ENCODE measurements at regions of chr1 and their contacts with region 1.

Region 1: GRCh38 chr1:182143154-182143657 is 81.7 kb upstream of the ZNF648 start:
- DNase-seq: peak; percentile 94
- ATAC-seq: peak; percentile 76 to 79

Region 2: DNA sequence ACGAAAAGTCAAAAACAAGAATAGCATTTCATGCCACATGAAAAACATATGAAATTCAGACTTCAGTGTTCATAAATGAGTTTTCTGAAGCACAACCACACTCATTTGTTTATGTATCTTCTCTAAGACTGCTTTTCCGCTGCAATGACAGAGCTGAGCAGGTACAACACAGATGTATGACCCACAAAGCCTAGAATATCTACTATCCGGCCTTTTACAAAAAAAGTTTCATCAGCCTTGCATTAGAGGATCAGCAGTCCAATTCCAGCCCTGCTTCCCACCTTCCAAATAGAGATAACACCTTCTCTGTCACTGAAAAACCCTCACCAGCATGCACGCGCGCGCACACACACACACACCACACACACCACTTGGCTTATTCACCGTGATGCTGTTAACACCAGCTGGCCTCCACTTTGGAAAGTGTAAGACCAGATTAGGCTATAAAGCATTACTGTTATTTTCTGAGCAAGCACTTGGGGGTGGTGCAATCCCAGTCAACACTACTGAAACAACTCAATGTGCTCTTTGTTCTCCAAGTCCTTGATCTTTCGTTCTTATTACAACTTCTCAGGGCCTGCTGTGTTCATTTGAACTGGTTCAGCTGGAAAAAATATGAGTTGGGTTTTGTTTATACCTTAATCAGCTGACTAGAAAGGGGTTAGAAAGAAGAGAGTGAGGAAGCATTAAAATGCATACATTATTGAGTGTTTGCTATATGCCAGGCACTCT is 158.4 kb after region 1 on chr1:
- intact Hi-C with region 1: loop called (anchors 10 kb)
- DNase-seq: peak; percentile 56
- ATAC-seq: peak; percentile 74 to 87

Region 3: GRCh38 chr1:182397771-182398393 is 254.7 kb after region 1 on chr1:
- intact Hi-C with region 1: loop called (anchors 1 to 2 kb)
- DNase-seq: no peak
- ATAC-seq: no peak

Measured in left cardiac atrium (tissue), 4 donors.